ENCODE measurements at regions of chr20 and their contacts with region 1.

Region 1: DNA sequence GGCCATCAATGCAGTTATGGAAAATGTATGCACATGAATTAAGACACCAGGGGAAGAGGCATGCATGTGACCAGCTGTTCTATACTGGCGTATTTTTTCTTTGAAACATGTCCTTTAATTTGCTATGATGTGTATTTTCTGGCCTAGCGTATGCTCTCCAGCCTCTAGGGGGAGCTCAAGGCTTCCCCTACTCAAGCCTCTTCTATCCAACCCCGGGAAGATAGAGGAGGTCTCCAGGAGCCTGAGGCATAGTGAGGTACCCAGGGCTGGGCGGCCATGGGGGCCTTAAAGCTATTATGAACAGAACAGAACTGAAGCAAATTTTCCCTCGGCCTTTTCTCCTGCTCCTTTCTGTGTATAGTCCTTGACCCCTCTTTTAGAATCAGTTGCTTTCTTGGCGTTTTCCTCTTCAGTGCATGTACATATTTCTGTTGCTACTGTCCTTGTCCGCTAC is 528.9 kb downstream of the MAFB start:
- DNase-seq: peak; percentile 13 to 18
- ATAC-seq: peak in 7 of 8 donors; percentile 52 to 81 (median 67)
- H3K4me3 ChIP-seq: no peak overlapping the region
- H3K27ac ChIP-seq: no peak overlapping the region
- H3K4me1 ChIP-seq: no peaks in the 10 kb centered on the region
- H3K27me3 ChIP-seq: peaks cover 0 to 9% (median 0%) of the 10 kb centered on the region in 7 donors
- CTCF ChIP-seq: peak; percentile 54 to 79 (median 71)

Region 2: GRCh38 chr20:39885975-39886649 is 274.0 kb before region 1 on chr20:
- intact Hi-C with region 1: loop called in 1 of 10 experiments (anchors 10 kb)
- DNase-seq: peak; percentile 51 to 69
- ATAC-seq: peak; percentile 61 to 88 (median 82)
- H3K4me3 ChIP-seq: no peak overlapping the region
- H3K27ac ChIP-seq: peak overlapping the region in 2 of 10 donors; percentile 10 to 50
- H3K4me1 ChIP-seq: peaks cover 0 to 11% (median 0%) of the 10 kb centered on the region in 9 donors
- H3K27me3 ChIP-seq: no peaks in the 10 kb centered on the region
- CTCF ChIP-seq: peak; percentile 24 to 71 (median 65)

Region 3: GRCh38 chr20:40463171-40463570 is 303.0 kb after region 1 on chr20:
- intact Hi-C with region 1: loop called in 1 of 10 experiments (anchors 10 kb)
- DNase-seq: no peak
- ATAC-seq: peak in 3 of 8 donors; percentile 22 to 48 (median 41)
- H3K4me3 ChIP-seq: no peak overlapping the region
- H3K27ac ChIP-seq: peak overlapping the region in 2 of 10 donors; percentile 4 to 82
- H3K4me1 ChIP-seq: peaks cover 0 to 33% (median 0%) of the 10 kb centered on the region in 9 donors
- H3K27me3 ChIP-seq: no peaks in the 10 kb centered on the region
- CTCF ChIP-seq: no peak